Activated B cell treated with CpG ODN at 0.5 μM for 24 hours (primary cell): ENCODE measurements at regions of chr3 and their contacts with region 1.

Region 1: GRCh38 chr3:108221911-108222852 is at the start of gene IFT57:
- DNase-seq: peak; percentile 95
- ATAC-seq: peak; percentile 91
- H3K4me3 Mint-ChIP-seq: peak within 1 kb of the TSS; percentile 100
- H3K27ac Mint-ChIP-seq: peak within 1 kb of the TSS; percentile 100
- H3K4me1 Mint-ChIP-seq: peaks cover 66% of the 10 kb centered on the region
- H3K27me3 Mint-ChIP-seq: no peaks in the 10 kb centered on the region
- CTCF ChIP-seq: no peak
- total RNA-seq, gene IFT57: 63.2 and 64.9 TPM in 2 replicates

Region 2: DNA sequence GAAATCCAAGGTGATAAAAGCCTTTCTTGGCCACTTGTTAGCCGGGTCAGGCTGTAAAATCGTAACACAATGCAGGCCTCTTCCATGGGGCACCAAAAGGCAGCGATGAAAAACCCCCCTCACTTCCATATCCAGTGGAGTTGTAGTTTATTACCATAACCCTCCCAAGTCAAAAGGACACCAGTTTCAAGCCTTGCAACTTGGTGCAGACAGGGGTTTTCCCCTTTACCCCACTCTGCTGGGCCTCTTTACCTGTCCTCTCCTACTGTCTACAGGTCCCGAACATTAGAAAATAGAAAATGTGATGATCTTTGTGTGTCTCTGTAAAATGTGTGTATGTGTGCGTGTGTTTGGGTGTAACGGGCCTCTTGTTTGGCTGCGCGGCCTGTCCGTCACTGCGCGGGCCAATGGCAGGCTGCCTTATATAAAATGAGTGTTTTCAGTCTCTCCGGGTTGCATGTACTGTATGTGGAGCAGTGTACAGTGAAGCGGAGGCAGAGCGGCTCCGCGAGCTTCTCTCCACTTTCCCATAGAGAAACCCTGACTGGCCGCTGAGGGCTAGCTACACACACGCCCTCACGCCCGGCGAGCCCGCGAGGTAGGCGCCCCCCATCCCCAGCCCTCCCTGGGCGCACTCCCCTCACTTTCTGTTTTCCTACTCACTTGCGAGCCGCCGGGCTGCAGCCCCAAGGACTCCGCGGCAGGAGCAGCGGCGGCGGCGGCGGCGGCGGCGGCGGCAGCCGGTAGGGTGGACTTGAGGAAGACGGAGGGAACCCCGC is 699.5 kb before region 1 on chr3 and contains the start of gene BBX:
- CTCF ChIA-PET with region 1: no interaction called
- POLR2A ChIA-PET with region 1: no interaction called
- intact Hi-C with region 1: loop called (anchors 5 kb)
- DNase-seq: peak; percentile 89
- ATAC-seq: peak; percentile 87
- H3K4me3 Mint-ChIP-seq: peak within 1 kb of the TSS; percentile 96
- H3K27ac Mint-ChIP-seq: peak within 1 kb of the TSS; percentile 98
- H3K4me1 Mint-ChIP-seq: peaks cover 37% of the 10 kb centered on the region
- H3K27me3 Mint-ChIP-seq: no peaks in the 10 kb centered on the region
- CTCF ChIP-seq: no peak
- total RNA-seq, gene BBX: 75.8 and 77.5 TPM in 2 replicates

Region 3: DNA sequence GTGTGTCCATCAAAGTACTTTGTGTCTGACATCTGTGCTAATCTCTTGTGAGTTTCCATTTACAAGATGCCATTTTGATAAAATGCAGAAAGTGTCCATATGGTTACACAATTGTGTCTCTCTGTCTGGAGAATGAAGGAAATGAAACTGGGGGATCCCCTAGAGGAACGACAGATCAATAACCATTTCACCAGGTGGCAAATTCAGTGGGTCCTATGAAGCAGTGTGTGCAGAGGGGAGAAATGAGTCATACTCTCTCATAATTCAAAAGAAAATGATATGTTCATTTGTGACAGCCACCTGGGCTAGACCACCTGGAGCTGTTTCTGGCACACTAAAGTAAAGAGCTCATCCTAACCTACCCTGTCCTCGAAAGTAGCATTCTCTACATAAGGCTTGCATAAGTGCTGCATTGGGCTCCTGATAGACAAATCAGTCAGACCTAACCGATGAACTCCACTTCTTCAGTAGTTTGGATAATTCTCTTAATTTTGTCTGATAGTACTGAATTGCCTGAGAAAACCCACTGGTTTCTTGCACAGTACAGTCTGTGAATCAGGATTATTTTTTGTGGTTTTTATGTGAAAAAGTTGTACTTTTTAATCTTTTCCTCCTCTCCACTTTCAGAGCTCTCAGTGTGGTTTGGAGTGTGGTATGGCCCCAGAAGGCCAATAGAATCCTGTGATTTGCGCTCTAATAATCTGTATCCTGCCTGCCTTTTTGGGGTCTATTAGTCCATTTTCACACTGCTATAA is 121.1 kb before region 1 on chr3:
- CTCF ChIA-PET with region 1: no interaction called
- POLR2A ChIA-PET with region 1: interaction called, 14 read pairs
- intact Hi-C with region 1: loop called (anchors 1 kb)
- DNase-seq: no peak
- ATAC-seq: peak; percentile 82
- H3K4me3 Mint-ChIP-seq: peak overlapping the region; percentile 61
- H3K27ac Mint-ChIP-seq: peak overlapping the region; percentile 87
- H3K4me1 Mint-ChIP-seq: peaks cover 71% of the 10 kb centered on the region
- H3K27me3 Mint-ChIP-seq: no peaks in the 10 kb centered on the region
- CTCF ChIP-seq: no peak

Region 4: GRCh38 chr3:108208831-108209230 is 13.4 kb before region 1 on chr3:
- CTCF ChIA-PET with region 1: no interaction called
- POLR2A ChIA-PET with region 1: interaction called, 6 read pairs
- intact Hi-C with region 1: loop called (anchors 1 kb)
- DNase-seq: no peak
- ATAC-seq: peak; percentile 62
- H3K4me3 Mint-ChIP-seq: no peak overlapping the region
- H3K27ac Mint-ChIP-seq: peak overlapping the region; percentile 46
- H3K4me1 Mint-ChIP-seq: peaks cover 38% of the 10 kb centered on the region
- H3K27me3 Mint-ChIP-seq: no peaks in the 10 kb centered on the region
- CTCF ChIP-seq: no peak

Region 5: GRCh38 chr3:108322352-108322751 is 100.2 kb after region 1 on chr3:
- CTCF ChIA-PET with region 1: interaction called, 4 read pairs
- POLR2A ChIA-PET with region 1: interaction called, 5 read pairs
- intact Hi-C with region 1: loop called (anchors 1 kb)
- DNase-seq: no peak
- ATAC-seq: peak; percentile 91
- H3K4me3 Mint-ChIP-seq: no peak overlapping the region
- H3K27ac Mint-ChIP-seq: peak overlapping the region; percentile 57
- H3K4me1 Mint-ChIP-seq: peaks cover 14% of the 10 kb centered on the region
- H3K27me3 Mint-ChIP-seq: no peaks in the 10 kb centered on the region
- CTCF ChIP-seq: no peak